H1 (cell line): ENCODE measurements at regions of chr17 and their contacts with region 1.

Region 1: DNA sequence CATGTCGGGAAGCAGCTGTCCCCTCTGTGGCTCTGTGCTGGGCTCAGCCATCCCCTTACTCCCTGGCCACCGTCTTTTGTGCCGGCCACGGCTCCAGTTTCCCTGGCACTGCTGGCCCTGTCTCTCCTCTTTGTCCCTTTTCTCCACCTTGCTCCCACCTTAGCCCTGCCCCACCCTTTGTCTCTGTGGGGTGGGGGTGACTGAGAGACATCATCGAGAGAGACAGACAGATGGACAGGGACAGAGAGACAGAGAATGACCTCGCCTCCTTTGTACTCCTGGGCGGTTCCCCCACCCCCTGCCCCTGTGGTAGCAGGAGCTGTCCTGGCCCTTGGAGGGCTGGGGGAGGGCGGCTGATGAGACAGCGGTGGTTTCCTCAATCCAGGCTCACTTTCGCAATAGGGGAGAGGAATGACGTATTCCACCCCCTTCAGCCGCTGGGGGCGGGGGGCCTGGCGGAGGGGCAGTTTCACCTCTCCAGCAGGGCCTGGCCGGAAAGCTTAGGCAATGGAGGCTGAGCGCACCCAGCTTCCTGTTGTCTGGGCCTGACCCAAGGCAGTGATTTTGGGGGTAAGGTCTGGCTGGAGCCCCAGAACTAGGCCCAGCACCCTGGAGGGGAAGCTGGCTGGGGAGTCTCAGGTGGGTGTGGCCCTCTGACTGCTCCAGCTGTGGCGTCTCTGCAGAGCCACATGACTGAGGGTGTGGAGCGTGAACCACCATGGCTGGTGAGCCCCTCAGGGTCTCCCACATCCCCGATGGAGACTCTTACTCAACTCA is 7.3 kb downstream of the FMNL1 start:
- DNase-seq: no peak
- H3K4me3 ChIP-seq: no peak overlapping the region
- H3K27ac ChIP-seq: no peak overlapping the region
- H3K4me1 ChIP-seq: peaks cover 5 to 29% (median 20%) of the 10 kb centered on the region in 4 experiments
- H3K27me3 ChIP-seq: peaks cover 0 to 5% (median under 1%) of the 10 kb centered on the region in 4 experiments; a peak in 3 of 7 replicates
- CTCF ChIP-seq: no peak
- EP300 ChIP-seq: no peak
- POLR2A ChIP-seq: no peak
- RAD21 ChIP-seq: no peak

Region 2: DNA sequence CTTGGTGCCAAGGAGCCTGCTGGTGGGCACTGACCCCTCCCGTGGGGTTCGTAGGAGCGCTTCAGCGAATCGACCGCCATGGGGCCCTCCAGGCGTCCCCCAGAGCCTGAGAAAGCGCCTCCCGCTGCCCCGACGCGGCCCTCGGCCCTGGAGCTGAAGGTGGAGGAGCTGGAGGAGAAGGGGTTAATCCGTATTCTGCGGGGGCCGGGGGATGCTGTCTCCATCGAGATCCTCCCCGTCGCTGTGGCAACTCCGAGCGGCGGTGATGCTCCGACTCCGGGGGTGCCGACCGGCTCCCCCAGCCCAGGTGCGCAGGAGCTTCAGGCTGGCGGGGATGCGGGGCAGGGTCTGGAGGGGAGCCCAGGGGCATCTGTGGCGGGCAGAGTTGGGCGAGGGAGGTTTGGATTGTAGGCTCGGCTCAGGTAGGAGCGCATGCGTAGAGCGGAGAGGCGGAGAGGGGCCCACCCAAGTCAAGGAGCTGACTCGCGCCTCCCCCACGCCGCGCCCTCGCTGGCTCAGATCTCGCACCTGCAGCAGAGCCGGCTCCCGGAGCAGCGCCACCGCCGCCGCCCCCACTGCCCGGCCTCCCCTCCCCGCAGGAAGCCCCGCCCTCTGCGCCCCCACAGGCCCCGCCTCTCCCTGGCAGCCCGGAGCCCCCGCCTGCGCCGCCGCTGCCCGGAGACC is 12.5 kb after region 1 on chr17:
- CTCF ChIA-PET with region 1: interaction called, 362 read pairs
- POLR2A ChIA-PET with region 1: interaction called, 17 read pairs
- DNase-seq: peak in 1 of 2 experiments; percentile 84
- H3K4me3 ChIP-seq: peak overlapping the region; percentile 54 to 73 (median 60)
- H3K27ac ChIP-seq: no peak overlapping the region
- H3K4me1 ChIP-seq: peaks cover 0 to 18% (median 13%) of the 10 kb centered on the region in 4 experiments; a peak in 6 of 7 replicates
- H3K27me3 ChIP-seq: peaks cover 0 to 25% (median 18%) of the 10 kb centered on the region in 4 experiments; a peak in 6 of 7 replicates
- CTCF ChIP-seq: no peak
- EP300 ChIP-seq: no peak
- POLR2A ChIP-seq: no peak
- RAD21 ChIP-seq: no peak

Region 3: DNA sequence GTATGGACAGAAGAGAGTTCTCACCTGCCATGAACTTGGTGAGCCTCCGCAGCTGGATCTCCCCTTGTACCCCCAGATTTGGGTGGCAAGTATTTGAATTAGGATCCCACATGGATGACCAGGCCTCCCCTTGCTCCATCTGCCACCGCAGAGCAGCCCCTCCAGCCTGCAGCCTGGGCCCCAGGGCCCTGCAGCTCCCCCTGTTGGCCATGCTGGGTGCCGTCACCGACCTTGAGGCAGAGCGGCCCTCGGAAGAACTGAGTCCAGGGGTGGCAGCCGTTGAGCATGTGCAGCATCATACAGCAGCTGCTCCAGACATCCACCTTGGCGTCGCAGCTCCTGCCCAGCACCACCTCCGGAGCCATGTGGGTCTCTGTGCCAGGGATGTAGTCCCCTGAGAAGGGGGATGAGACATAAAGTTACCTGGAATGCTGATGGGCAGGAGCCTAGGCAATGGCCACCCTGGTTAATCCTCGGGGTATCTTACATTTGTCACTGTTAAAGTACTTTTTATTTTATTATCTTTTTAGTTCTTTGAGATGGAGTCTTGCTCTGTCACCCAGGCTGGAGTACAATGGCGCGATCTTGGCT is 42.0 kb after region 1 on chr17:
- CTCF ChIA-PET with region 1: interaction called, 216 read pairs
- POLR2A ChIA-PET with region 1: no interaction called
- DNase-seq: peak in 1 of 2 experiments; percentile 91
- H3K4me3 ChIP-seq: no peak overlapping the region
- H3K27ac ChIP-seq: no peak overlapping the region
- H3K4me1 ChIP-seq: peaks cover 0 to 1% (median 0%) of the 10 kb centered on the region in 4 experiments; a peak in 1 of 7 replicates
- H3K27me3 ChIP-seq: no peaks in the 10 kb centered on the region
- CTCF ChIP-seq: peak; percentile 93 to 100 (median 96)
- EP300 ChIP-seq: no peak
- POLR2A ChIP-seq: no peak
- RAD21 ChIP-seq: peak; percentile 69 to 81

Region 4: DNA sequence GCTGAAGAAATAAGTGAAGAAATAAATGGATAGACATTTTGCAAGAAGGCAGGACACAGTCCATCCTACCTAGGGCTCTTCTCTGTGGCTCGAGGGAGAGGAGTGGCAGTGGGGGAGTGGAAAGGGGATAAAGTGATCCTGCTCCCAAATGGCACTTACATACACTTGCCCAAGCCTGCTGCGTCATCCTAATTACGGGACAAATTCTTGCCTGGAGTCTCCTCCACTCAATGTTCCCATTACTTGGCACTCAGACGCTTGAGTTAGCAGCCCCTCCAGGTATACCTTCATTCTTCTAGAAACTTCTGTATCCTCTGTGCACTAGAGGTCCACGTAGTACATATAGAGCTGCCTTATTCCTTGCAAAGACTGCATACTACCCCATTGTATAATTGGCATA is 103.6 kb after region 1 on chr17:
- CTCF ChIA-PET with region 1: no interaction called
- POLR2A ChIA-PET with region 1: no interaction called
- DNase-seq: no peak
- H3K4me3 ChIP-seq: no peak overlapping the region
- H3K27ac ChIP-seq: no peak overlapping the region
- H3K4me1 ChIP-seq: peaks cover 0 to 3% (median 0%) of the 10 kb centered on the region in 4 experiments; a peak in 1 of 7 replicates
- H3K27me3 ChIP-seq: peaks cover 0 to 15% (median 6%) of the 10 kb centered on the region in 4 experiments; a peak in 2 of 7 replicates
- CTCF ChIP-seq: no peak
- EP300 ChIP-seq: no peak
- POLR2A ChIP-seq: no peak
- RAD21 ChIP-seq: no peak

Region 5: GRCh38 chr17:45371414-45372327 is 142.7 kb after region 1 on chr17:
- CTCF ChIA-PET with region 1: interaction called, 10 read pairs
- POLR2A ChIA-PET with region 1: interaction called, 3 read pairs
- DNase-seq: peak; percentile 84 to 92
- H3K4me3 ChIP-seq: peak overlapping the region in 3 of 4 experiments; percentile 1 to 44 (median 14); a peak in 5 of 8 replicates
- H3K27ac ChIP-seq: peak overlapping the region; percentile 79
- H3K4me1 ChIP-seq: peaks cover 8 to 28% (median 16%) of the 10 kb centered on the region in 4 experiments
- H3K27me3 ChIP-seq: no peaks in the 10 kb centered on the region
- CTCF ChIP-seq: no peak
- EP300 ChIP-seq: 0 out of 3 replicates have a peak, but pooled peaks of 1 of the 2 experiments have one; percentile 45
- POLR2A ChIP-seq: peak; percentile 50 to 53; a peak in 2 of 3 replicates
- RAD21 ChIP-seq: no peak; a peak in 1 of 4 replicates